Endothelial cell of umbilical vein (primary cell): ENCODE measurements at regions of chr6 and their contacts with region 1.

Region 1: DNA sequence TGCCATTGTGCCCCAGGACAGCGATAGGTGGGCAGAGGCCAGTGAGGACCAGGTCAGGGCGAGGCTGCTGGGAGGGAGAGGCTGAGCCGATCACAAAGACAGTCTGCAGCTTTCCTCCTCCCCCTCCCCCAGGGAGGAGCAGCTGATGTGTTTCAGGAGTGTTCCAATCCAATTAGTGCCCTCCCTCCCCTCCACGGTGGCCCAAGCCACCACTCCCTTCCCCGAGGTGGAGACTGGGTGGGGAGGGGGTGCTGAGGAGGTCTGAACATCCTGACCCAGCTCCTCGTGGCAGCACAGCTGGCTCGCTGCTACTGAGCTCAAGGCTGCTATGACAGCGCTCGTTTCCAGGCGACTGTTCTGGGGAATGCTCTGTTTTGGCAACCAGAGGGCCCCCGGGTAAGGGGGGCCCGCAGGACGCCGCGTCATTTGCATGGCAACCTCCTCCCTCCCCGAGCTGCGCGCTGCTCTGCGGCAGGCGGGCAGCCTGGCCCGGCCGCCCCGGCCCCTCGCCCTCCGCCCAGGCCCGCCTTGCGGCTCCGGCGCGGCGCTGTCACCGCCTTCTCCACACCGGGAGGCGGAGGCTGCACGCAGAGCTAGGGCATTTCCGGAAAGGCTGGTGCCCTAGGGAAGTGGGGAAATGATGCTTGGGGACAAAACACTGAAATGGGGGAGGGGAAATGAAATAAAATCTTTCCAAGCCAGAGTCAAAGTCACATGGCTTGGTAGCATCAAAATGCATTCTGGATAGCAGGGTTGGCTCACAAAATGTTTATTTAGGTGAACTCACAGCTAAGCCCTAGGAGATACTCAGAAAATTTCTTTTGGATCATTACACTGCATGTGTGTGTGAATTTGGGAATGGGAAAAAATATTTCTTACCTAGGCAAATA is 67.4 kb upstream of the PIM1 start:
- DNase-seq: peak; percentile 83
- H3K4me3 ChIP-seq: peak overlapping the region; percentile 15 to 63 (median 22)
- H3K27ac ChIP-seq: peak overlapping the region; percentile 72
- H3K4me1 ChIP-seq: peaks cover 18% of the 10 kb centered on the region
- H3K27me3 ChIP-seq: no peaks in the 10 kb centered on the region
- CTCF ChIP-seq: no peak
- POLR2A ChIP-seq: peak; percentile 33

Region 2: GRCh38 chr6:37059344-37060206 is 42.9 kb before region 1 on chr6:
- CTCF ChIA-PET with region 1: interaction called, 4 read pairs
- POLR2A ChIA-PET with region 1: no interaction called
- dilution Hi-C with region 1: no loop called
- intact Hi-C with region 1: loop called (anchors 5 kb)
- DNase-seq: peak; percentile 77
- H3K4me3 ChIP-seq: no peak overlapping the region
- H3K27ac ChIP-seq: peak overlapping the region; percentile 69
- H3K4me1 ChIP-seq: peaks cover 9% of the 10 kb centered on the region
- H3K27me3 ChIP-seq: no peaks in the 10 kb centered on the region
- CTCF ChIP-seq: peak; percentile 53 to 60
- POLR2A ChIP-seq: no peak

Region 3: DNA sequence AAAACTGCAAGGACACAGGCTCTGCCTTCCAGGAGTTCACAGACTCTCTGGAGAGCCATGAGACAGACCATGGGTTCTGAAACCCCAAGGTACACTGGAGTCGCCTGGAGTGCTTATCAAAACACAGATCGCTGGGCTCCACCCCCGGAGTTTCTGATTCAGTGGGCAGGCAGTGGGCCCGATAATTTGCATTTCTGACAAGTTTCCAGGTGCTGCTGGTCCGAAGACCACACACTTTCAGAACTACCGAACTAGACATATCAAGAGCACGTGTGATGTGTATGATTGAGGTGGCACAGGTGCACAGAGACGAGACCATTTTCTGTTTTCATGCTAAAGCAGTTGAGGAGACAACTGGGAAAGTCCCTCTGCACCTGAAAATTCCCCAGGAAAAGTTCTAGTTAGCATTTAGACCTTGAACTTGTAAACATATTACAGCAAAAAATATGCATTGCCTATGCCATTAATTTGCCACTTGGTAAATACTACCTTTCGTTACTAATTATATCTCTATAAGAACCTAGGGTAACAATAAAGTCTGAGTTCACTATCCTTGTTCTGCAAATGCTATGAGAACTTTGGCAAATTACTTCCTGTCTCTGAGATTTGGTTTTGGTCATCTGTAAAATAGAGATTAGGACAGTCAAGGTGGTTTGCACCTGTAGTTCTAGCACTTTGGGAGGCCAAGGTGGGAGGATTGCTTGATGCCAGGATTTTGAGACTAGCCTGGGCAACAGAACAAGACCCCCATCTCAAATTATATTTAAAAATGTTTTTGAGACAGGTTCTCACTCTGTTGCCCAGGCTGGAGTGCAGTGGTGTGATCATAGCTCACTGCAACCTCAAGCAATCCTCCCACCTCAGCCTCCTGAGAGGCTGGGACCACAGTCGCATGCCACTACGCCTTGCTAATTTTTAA is 53.1 kb after region 1 on chr6:
- CTCF ChIA-PET with region 1: interaction called, 3 read pairs
- POLR2A ChIA-PET with region 1: no interaction called
- dilution Hi-C with region 1: no loop called
- intact Hi-C with region 1: loop called (anchors 2 kb)
- DNase-seq: no peak
- H3K4me3 ChIP-seq: no peak overlapping the region
- H3K27ac ChIP-seq: no peak overlapping the region
- H3K4me1 ChIP-seq: peaks cover 3% of the 10 kb centered on the region
- H3K27me3 ChIP-seq: peaks cover 2 to 7% of the 10 kb centered on the region in 2 experiments
- CTCF ChIP-seq: no peak
- POLR2A ChIP-seq: no peak

Region 4: DNA sequence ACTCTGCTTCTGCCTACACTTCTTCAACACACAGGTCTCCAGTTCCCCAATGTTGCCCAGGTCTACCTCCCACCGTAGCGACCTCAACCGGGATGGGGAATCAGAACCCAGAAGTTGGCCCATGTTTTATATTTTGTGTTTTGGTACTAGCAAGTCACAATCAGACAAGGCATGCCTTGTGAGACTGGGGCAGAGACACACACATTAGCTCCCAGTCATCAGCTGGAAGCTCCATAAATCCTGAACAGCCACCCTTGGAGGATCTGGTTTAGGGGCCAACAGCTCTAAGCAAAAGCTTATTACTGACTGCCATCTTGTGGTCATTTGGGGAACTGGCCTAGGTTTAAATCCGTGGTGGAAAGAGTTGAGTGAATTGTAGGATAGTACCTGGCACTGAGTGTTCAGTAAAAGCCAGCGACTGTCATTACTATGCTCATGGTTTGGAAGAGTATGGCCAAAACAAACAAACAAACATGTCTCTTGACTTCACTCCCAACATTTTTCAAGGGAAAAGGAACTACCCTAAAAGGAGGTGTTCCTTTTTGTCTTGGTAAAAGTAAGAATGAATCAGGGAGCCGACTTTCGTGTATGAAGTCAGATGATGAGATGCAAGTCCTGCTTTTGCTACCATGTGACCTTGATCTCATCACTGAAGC is 107.9 kb after region 1 on chr6:
- CTCF ChIA-PET with region 1: no interaction called
- POLR2A ChIA-PET with region 1: no interaction called
- dilution Hi-C with region 1: no loop called
- intact Hi-C with region 1: no loop called
- DNase-seq: peak; percentile 82
- H3K4me3 ChIP-seq: no peak overlapping the region
- H3K27ac ChIP-seq: no peak overlapping the region
- H3K4me1 ChIP-seq: no peaks in the 10 kb centered on the region
- H3K27me3 ChIP-seq: peaks cover 12 to 18% of the 10 kb centered on the region in 2 experiments
- CTCF ChIP-seq: peak; percentile 80 to 91
- POLR2A ChIP-seq: no peak